CD8-positive, alpha-beta T cell (primary cell): ENCODE measurements at regions of chr15 and their contacts with region 1.

Region 1: GRCh38 chr15:88904624-88905327 is 8.4 kb downstream of the MFGE8 start:
- DNase-seq: peak; percentile 90 to 97 (median 95)
- ATAC-seq: peak; percentile 98
- H3K4me3 ChIP-seq: no peak overlapping the region
- H3K4me3 Mint-ChIP-seq: peak overlapping the region; percentile 61
- H3K27ac ChIP-seq: peak overlapping the region; percentile 36 to 66
- H3K27ac Mint-ChIP-seq: peak overlapping the region; percentile 91
- H3K4me1 ChIP-seq: peaks cover 31% of the 10 kb centered on the region
- H3K4me1 Mint-ChIP-seq: peaks cover 41% of the 10 kb centered on the region
- H3K27me3 ChIP-seq: no peaks in the 10 kb centered on the region
- H3K27me3 Mint-ChIP-seq: no peaks in the 10 kb centered on the region
- CTCF ChIP-seq: peak; percentile 87

Region 2: DNA sequence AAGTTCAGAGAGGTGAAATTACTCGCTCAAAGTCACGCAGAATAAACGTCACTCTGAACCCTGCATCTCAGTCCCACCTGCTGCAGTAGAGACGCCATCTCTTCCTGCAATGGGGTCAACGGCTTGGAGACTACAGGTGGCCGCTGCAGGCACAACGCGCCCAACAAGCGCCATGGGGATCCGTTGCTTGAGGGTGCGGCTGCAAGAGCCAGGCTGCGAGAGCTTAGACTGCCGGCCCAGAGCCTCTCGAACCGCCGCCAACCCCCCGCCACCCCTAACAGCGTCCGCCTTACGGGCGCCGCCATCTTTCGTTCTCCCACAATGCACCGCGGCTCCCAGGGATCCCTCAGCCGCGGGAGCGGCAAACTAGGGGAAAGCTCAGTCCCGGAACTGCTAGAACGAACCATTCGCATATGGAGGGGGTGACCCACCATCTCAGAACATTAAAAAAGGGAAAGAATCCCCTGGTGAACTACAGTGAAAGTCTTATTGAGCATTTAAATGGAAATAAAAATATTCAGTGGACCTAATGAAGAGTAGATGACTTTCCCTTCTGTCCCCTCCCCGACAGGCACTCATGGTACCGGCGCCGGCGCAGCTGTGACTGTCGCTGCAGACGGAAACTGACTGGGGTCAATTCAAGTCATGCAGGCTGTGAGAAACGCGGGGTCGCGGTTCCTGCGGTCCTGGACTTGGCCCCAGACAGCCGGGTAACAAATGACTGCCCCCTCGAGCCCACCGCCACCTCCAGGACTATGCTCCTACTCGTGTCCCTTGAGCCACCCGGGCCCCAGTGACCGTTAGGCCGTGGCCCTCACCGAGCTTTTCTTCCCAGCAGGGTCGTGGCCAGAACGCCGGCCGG is 437.5 kb before region 1 on chr15 and contains the starts of genes MRPL46 and MRPS11:
- CTCF ChIA-PET with region 1: no interaction called
- POLR2A ChIA-PET with region 1: no interaction called
- intact Hi-C with region 1: loop called (anchors 1 to 5 kb)
- DNase-seq: peak; percentile 81 to 94 (median 89)
- ATAC-seq: peak; percentile 91
- H3K4me3 ChIP-seq: peak within 1 kb of the TSS; percentile 57 to 92
- H3K4me3 Mint-ChIP-seq: peak within 1 kb of the TSS; percentile 98
- H3K27ac ChIP-seq: peak within 1 kb of the TSS; percentile 90 to 98
- H3K27ac Mint-ChIP-seq: peak within 1 kb of the TSS; percentile 99
- H3K4me1 ChIP-seq: peaks cover 17% of the 10 kb centered on the region
- H3K4me1 Mint-ChIP-seq: peaks cover 27% of the 10 kb centered on the region
- H3K27me3 ChIP-seq: no peaks in the 10 kb centered on the region
- H3K27me3 Mint-ChIP-seq: no peaks in the 10 kb centered on the region
- CTCF ChIP-seq: no peak
- total RNA-seq, gene MRPL46: 11.8 to 12.6 TPM
- total RNA-seq, gene MRPS11: 7.4 to 9.6 TPM

Region 3: DNA sequence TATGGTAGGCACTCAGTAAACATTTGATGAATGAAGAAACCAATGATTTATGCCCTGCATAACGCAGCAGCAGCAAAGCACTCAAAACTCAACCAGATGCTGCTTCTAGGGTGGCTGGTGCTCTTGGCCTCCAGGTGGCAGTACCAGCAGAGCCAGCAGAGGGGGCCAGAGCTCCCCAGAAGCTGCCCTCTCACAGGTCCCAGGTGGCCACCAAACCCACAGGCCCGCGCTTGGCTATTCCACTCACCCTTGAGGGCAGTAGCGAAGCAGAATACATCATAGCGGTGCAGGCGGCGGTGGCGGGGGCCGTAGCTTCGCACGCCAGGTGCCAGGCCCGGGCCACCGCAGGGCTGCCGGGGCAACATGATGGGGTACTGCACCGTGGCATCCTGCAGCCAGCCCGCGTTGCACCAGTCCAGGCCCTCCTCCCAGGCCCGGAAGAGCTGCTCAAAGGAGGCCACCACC is 26.0 kb before region 1 on chr15:
- CTCF ChIA-PET with region 1: interaction called, 12 read pairs
- POLR2A ChIA-PET with region 1: no interaction called
- intact Hi-C with region 1: no loop called
- DNase-seq: peak in 6 of 9 experiments; percentile 6 to 52 (median 32)
- ATAC-seq: peak; percentile 61
- H3K4me3 ChIP-seq: no peak overlapping the region
- H3K4me3 Mint-ChIP-seq: no peak overlapping the region
- H3K27ac ChIP-seq: no peak overlapping the region
- H3K27ac Mint-ChIP-seq: no peak overlapping the region
- H3K4me1 ChIP-seq: no peaks in the 10 kb centered on the region
- H3K4me1 Mint-ChIP-seq: peaks cover 3% of the 10 kb centered on the region
- H3K27me3 ChIP-seq: no peaks in the 10 kb centered on the region
- H3K27me3 Mint-ChIP-seq: no peaks in the 10 kb centered on the region
- CTCF ChIP-seq: peak; percentile 35

Region 4: GRCh38 chr15:89017370-89018066 is 112.7 kb after region 1 on chr15:
- CTCF ChIA-PET with region 1: interaction called, 64 read pairs
- POLR2A ChIA-PET with region 1: interaction called, 6 read pairs
- intact Hi-C with region 1: loop called (anchors 1 kb)
- DNase-seq: peak; percentile 71 to 92 (median 86)
- ATAC-seq: peak; percentile 96
- H3K4me3 ChIP-seq: peak overlapping the region; percentile 19 to 22
- H3K4me3 Mint-ChIP-seq: peak overlapping the region; percentile 68
- H3K27ac ChIP-seq: no peak overlapping the region
- H3K27ac Mint-ChIP-seq: peak overlapping the region; percentile 18
- H3K4me1 ChIP-seq: peaks cover 9% of the 10 kb centered on the region
- H3K4me1 Mint-ChIP-seq: peaks cover 12% of the 10 kb centered on the region
- H3K27me3 ChIP-seq: no peaks in the 10 kb centered on the region
- H3K27me3 Mint-ChIP-seq: peaks cover 5% of the 10 kb centered on the region
- CTCF ChIP-seq: peak; percentile 58

Region 5: DNA sequence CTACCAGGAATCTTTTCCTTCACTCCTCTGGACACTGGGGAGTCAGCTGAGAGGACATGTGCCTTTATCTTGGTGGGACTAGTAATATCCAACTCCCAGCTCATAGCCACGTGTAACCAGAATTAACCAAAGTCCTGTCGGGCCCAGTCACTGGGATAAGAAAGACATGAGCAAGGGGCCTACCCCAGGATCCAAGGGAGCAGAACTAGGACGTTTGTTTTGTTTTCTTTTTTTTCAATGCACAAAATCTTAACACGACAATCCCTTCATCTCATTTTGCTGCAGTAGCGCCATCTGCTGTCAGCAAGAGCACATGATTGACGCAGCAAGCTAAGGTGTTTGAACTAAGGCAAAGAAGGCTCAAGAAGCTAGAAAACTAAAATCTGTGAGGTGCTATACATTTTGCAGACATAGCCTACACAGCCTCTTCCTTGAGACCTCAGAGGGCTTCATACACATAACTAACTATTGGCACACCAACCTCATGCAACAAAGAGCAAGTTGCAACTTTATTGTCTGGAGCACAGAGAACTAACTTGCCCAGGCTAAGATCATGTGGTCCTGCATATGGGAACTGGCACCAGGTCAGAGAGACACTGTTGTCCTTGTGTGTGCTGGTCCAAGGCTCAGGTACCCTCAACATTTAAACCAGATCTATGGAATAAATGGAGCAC is 273.0 kb after region 1 on chr15:
- CTCF ChIA-PET with region 1: interaction called, 14 read pairs
- POLR2A ChIA-PET with region 1: interaction called, 6 read pairs
- intact Hi-C with region 1: no loop called
- DNase-seq: peak; percentile 17 to 81 (median 58)
- ATAC-seq: peak; percentile 40
- H3K4me3 ChIP-seq: no peak overlapping the region
- H3K4me3 Mint-ChIP-seq: no peak overlapping the region
- H3K27ac ChIP-seq: no peak overlapping the region
- H3K27ac Mint-ChIP-seq: no peak overlapping the region
- H3K4me1 ChIP-seq: no peaks in the 10 kb centered on the region
- H3K4me1 Mint-ChIP-seq: peaks cover 5% of the 10 kb centered on the region
- H3K27me3 ChIP-seq: no peaks in the 10 kb centered on the region
- H3K27me3 Mint-ChIP-seq: no peaks in the 10 kb centered on the region
- CTCF ChIP-seq: peak; percentile 85

Region 6: GRCh38 chr15:89341316-89342005 is 436.7 kb after region 1 on chr15:
- CTCF ChIA-PET with region 1: no interaction called
- POLR2A ChIA-PET with region 1: no interaction called
- intact Hi-C with region 1: no loop called
- DNase-seq: no peak
- ATAC-seq: no peak
- H3K4me3 ChIP-seq: no peak overlapping the region
- H3K4me3 Mint-ChIP-seq: no peak overlapping the region
- H3K27ac ChIP-seq: no peak overlapping the region
- H3K27ac Mint-ChIP-seq: no peak overlapping the region
- H3K4me1 ChIP-seq: no peaks in the 10 kb centered on the region
- H3K4me1 Mint-ChIP-seq: no peaks in the 10 kb centered on the region
- H3K27me3 ChIP-seq: peaks cover 0 to 4% of the 10 kb centered on the region in 2 experiments
- H3K27me3 Mint-ChIP-seq: peaks cover 3% of the 10 kb centered on the region
- CTCF ChIP-seq: no peak